ENCODE measurements at regions of chr4 and their contacts with region 1.

Region 1: DNA sequence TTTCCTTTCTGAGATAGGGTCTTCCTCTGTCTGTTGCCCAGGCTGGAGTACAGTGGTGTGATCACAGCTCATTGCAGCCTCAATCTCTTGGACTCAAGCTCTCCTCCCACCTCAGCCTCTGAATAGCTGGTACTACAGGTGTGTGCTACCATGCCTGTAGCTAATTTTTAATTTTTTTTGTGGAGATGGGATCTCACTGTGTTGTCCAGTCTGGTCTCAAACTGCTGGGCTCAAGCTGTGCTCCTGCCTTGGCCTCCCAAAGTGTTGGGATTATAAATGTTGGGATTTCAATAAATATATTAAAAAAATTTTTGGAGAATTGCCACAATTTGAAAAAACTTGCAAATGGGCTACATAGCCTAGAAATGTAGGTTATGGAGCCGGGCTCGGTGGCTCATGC is 18.5 kb downstream of the RAPGEF2 start:
- DNase-seq: no peak
- H3K4me3 ChIP-seq: no peak overlapping the region
- H3K27ac ChIP-seq: no peak overlapping the region
- H3K4me1 ChIP-seq: peaks cover 0 to 22% (median 1%) of the 10 kb centered on the region in 4 experiments
- H3K27me3 ChIP-seq: no peaks in the 10 kb centered on the region

Region 2: DNA sequence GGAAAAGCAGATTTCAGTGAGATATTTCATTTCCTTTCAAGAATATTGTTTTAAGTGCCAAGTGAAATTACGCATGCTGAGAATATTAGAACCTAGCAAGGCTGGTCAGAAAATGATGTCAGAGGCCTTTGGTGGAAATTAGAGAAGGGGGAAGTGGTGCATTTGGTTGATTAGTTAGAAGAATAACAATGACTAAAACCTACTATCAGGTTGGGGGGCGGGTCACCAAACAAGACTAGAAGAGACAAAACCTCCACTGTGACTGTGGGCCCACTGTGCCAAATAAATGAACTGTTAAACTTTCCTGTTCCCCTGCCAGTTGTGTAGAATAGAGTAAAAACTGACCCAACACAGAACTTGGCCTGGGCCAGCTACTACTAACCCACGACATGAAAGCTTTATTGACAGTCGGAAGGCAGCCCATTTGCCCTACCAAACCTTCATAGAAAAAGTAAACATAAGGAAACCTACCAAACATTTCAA is 15.6 kb before region 1 on chr4:
- CTCF ChIA-PET with region 1: interaction called, 15 read pairs
- POLR2A ChIA-PET with region 1: no interaction called
- DNase-seq: peak; percentile 57 to 85 (median 80)
- H3K4me3 ChIP-seq: peak overlapping the region in 6 of 7 experiments; percentile 81 to 98 (median 90)
- H3K27ac ChIP-seq: peak overlapping the region; percentile 76 to 87
- H3K4me1 ChIP-seq: peaks cover 29 to 62% (median 44%) of the 10 kb centered on the region in 4 experiments
- H3K27me3 ChIP-seq: peaks cover 0 to 1% (median 0%) of the 10 kb centered on the region in 5 experiments

Region 3: DNA sequence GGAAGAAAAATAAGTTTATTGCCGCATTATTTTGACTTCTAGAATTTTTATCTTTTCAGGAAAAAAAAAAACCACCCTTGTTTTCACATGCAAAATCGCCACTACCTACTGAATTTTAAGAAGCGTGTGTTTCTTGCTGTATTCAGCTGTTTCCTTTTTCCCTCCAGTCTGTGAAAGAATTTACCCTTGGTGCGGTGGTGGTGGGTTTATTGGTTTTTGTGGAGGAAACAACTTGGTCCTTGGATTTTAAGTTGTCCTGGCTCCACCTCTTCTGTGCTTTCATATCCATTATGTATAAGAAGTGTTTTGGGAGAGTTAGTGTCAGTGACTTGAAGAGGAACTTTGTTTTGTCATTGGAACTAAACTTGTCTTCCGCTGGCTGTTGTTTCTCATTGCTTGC is 10.4 kb before region 1 on chr4:
- CTCF ChIA-PET with region 1: interaction called, 15 read pairs
- POLR2A ChIA-PET with region 1: no interaction called
- DNase-seq: peak in 2 of 3 donors; percentile 55 to 63
- H3K4me3 ChIP-seq: peak overlapping the region in 3 of 7 experiments; percentile 23 to 60 (median 26)
- H3K27ac ChIP-seq: peak overlapping the region in 1 of 2 experiments; percentile 55
- H3K4me1 ChIP-seq: peaks cover 22 to 57% (median 34%) of the 10 kb centered on the region in 4 experiments
- H3K27me3 ChIP-seq: no peaks in the 10 kb centered on the region

Region 4: GRCh38 chr4:159273141-159273438 is 151.7 kb after region 1 on chr4:
- CTCF ChIA-PET with region 1: no interaction called
- POLR2A ChIA-PET with region 1: no interaction called
- DNase-seq: no peak
- H3K4me3 ChIP-seq: no peak overlapping the region
- H3K27ac ChIP-seq: no peak overlapping the region
- H3K4me1 ChIP-seq: peaks cover 5 to 19% (median 9%) of the 10 kb centered on the region in 4 experiments
- H3K27me3 ChIP-seq: no peaks in the 10 kb centered on the region

Measured in common myeloid progenitor, CD34-positive (primary cell).